Caco-2 (cell line): ENCODE measurements at regions of chr15 and their contacts with region 1.

Region 1: DNA sequence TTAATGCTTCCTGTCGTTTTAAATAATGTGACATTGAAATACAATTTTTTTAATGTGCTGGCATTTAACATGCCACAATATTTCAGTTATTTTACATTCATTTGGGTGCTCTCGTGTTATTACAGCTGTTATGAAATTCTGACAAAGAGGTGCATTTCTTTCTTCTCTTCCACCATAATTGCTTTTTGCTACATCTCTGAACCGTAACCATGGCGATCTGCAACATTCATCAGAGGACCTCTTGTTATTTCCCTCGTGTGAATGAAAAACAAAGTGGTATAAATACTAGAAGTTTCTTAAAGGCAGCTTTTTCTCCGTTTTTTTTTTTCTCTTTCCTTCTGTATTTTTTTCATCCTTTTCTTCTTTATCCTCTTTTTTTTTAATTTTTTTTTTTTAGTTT is 316.4 kb downstream of the MCTP2 start:
- DNase-seq: no peak
- H3K4me3 ChIP-seq: no peak overlapping the region
- H3K4me3 Mint-ChIP-seq: no peak overlapping the region
- H3K27ac Mint-ChIP-seq: no peak overlapping the region
- H3K4me1 ChIP-seq: no peaks in the 10 kb centered on the region
- H3K4me1 Mint-ChIP-seq: no peaks in the 10 kb centered on the region
- H3K27me3 ChIP-seq: no peaks in the 10 kb centered on the region
- H3K27me3 Mint-ChIP-seq: peaks cover 10% of the 10 kb centered on the region
- CTCF ChIP-seq: no peak

Region 2: GRCh38 chr15:94412979-94413746 is 134.5 kb before region 1 on chr15:
- CTCF ChIA-PET with region 1: no interaction called
- POLR2A ChIA-PET with region 1: no interaction called
- intact Hi-C with region 1: no loop called
- DNase-seq: no peak
- H3K4me3 ChIP-seq: no peak overlapping the region
- H3K4me3 Mint-ChIP-seq: no peak overlapping the region
- H3K27ac Mint-ChIP-seq: no peak overlapping the region
- H3K4me1 ChIP-seq: no peaks in the 10 kb centered on the region
- H3K4me1 Mint-ChIP-seq: no peaks in the 10 kb centered on the region
- H3K27me3 ChIP-seq: no peaks in the 10 kb centered on the region
- H3K27me3 Mint-ChIP-seq: no peaks in the 10 kb centered on the region
- CTCF ChIP-seq: peak in 1 of 2 experiments; percentile 36

Region 3: DNA sequence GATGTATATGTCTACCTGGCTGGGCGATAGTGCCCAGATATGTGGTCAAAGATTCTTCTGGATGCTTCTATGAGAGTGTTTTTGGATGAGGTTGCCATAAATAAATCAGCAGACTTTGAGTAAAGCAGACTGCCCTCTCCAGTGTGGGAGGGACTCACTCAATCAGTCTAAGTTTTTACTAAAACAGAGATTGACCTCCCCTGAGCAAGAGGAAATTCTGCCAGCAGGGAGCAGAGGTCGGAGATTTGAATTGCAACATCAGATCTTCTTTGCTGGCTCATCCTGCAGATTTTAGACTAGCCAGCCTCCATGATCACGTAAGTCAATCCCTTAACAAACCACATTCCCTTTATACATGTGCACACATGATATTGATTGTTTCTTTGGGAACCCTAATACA is 15.5 kb before region 1 on chr15:
- CTCF ChIA-PET with region 1: no interaction called
- POLR2A ChIA-PET with region 1: no interaction called
- intact Hi-C with region 1: loop called (anchors 2 kb)
- DNase-seq: no peak
- H3K4me3 ChIP-seq: no peak overlapping the region
- H3K4me3 Mint-ChIP-seq: no peak overlapping the region
- H3K27ac Mint-ChIP-seq: no peak overlapping the region
- H3K4me1 ChIP-seq: no peaks in the 10 kb centered on the region
- H3K4me1 Mint-ChIP-seq: no peaks in the 10 kb centered on the region
- H3K27me3 ChIP-seq: no peaks in the 10 kb centered on the region
- H3K27me3 Mint-ChIP-seq: peaks cover 18% of the 10 kb centered on the region
- CTCF ChIP-seq: no peak